T-cell (primary cell): ENCODE measurements at regions of chr6 and their contacts with region 1.

Region 1: GRCh38 chr6:161971043-161971442 is 697.2 kb upstream of the AGPAT4 start:
- DNase-seq: no peak
- ATAC-seq: no peak
- H3K4me3 ChIP-seq: no peak overlapping the region
- H3K4me3 Mint-ChIP-seq: no peak overlapping the region
- H3K27ac ChIP-seq: no peak overlapping the region
- H3K27ac Mint-ChIP-seq: no peak overlapping the region
- H3K4me1 ChIP-seq: no peaks in the 10 kb centered on the region
- H3K4me1 Mint-ChIP-seq: no peaks in the 10 kb centered on the region
- H3K27me3 ChIP-seq: no peaks in the 10 kb centered on the region
- H3K27me3 Mint-ChIP-seq: no peaks in the 10 kb centered on the region

Region 2: DNA sequence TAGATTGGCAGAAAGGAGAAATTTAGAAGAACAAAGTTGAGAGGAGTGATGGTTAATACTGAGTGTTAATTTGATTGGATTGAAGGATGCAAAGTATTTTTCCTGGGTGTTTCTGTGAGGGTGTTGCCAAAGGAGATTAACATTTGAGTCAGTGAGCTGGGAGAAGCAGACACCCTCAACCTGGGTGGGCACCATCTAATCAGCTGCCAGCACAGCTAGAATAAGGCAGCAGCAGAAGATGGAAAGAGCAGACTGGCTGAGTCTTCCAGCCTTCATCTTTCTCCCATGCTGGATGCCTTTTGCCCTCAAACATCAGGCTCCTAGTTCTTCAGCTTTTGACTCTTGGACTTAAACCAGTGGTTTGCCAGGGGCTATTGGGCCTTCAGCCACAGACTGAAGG is 259.5 kb before region 1 on chr6:
- CTCF ChIA-PET with region 1: no interaction called
- POLR2A ChIA-PET with region 1: interaction called in 1 of 2 experiments, 21 read pairs
- DNase-seq: no peak
- ATAC-seq: no peak
- H3K4me3 ChIP-seq: no peak overlapping the region
- H3K4me3 Mint-ChIP-seq: no peak overlapping the region
- H3K27ac ChIP-seq: no peak overlapping the region
- H3K27ac Mint-ChIP-seq: no peak overlapping the region
- H3K4me1 ChIP-seq: no peaks in the 10 kb centered on the region
- H3K4me1 Mint-ChIP-seq: no peaks in the 10 kb centered on the region
- H3K27me3 ChIP-seq: peaks cover 0 to under 1% of the 10 kb centered on the region in 2 experiments
- H3K27me3 Mint-ChIP-seq: no peaks in the 10 kb centered on the region